Esophagus muscularis mucosa (tissue), 4 donors: ENCODE measurements at regions of chr20 and their contacts with region 1.

Region 1: GRCh38 chr20:63056236-63056948 is 49.6 kb upstream of the BHLHE23 start:
- DNase-seq: no peak
- H3K4me3 ChIP-seq: peak overlapping the region in 1 of 4 donors; percentile 28
- H3K27ac ChIP-seq: no peak overlapping the region
- H3K4me1 ChIP-seq: peaks cover 2 to 10% (median 8%) of the 10 kb centered on the region in 4 donors
- H3K27me3 ChIP-seq: peaks cover 0 to 92% (median 7%) of the 10 kb centered on the region in 4 donors
- CTCF ChIP-seq: peak; percentile 73 to 96 (median 90)
- EP300 ChIP-seq: no peak
- POLR2A ChIP-seq: no peak

Region 2: GRCh38 chr20:63129991-63130657 is 73.7 kb after region 1 on chr20:
- intact Hi-C with region 1: no loop called
- DNase-seq: no peak
- H3K4me3 ChIP-seq: no peak overlapping the region
- H3K27ac ChIP-seq: no peak overlapping the region
- H3K4me1 ChIP-seq: no peaks in the 10 kb centered on the region
- H3K27me3 ChIP-seq: peaks cover 0 to 81% (median 6%) of the 10 kb centered on the region in 4 donors
- CTCF ChIP-seq: no peak
- EP300 ChIP-seq: no peak
- POLR2A ChIP-seq: no peak

Region 3: DNA sequence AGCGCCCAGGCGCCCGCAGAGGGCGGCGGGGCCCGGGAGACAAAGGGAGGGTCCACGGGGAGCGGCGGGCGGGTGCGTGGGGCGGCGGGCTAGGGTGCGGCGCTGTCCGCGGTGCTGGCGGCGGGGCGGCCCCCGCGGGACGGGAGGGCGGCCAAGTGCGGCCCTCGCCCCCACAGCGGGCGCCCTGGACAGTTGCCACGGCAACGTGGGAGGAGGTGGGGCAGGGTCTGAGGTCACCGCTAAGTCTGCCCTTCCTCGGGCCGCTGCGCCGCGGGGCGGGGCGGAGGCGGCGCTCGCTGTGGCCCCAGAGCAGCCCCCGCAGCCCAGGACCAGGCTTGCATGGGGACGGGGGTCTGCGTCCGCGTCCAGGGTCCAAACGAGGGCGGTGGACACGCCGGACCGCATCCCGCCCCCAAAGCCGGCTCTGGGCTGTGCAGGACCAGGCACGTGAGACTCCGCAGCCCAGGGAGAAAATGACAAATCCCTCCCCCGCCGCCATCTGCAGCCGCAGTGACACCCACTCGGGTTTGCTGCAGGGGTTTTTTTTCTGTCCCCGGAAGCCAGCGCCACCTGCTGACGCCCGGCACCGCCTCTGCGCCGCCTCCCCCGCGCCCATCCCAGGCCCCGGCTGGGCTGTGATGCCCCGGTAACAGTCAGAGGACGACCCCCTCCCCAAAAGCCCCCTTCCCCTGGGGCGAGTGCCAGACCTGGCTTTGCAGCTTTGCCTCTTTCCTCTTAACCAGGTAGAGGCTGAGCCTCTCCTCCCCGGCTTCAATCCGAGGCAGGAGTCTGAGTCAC is 122.7 kb after region 1 on chr20:
- intact Hi-C with region 1: loop called (anchors 1 kb)
- DNase-seq: no peak
- H3K4me3 ChIP-seq: peak overlapping the region; percentile 32 to 48 (median 38)
- H3K27ac ChIP-seq: no peak overlapping the region
- H3K4me1 ChIP-seq: peaks cover 28 to 51% (median 48%) of the 10 kb centered on the region in 4 donors
- H3K27me3 ChIP-seq: peaks cover 7 to 98% (median 61%) of the 10 kb centered on the region in 4 donors
- CTCF ChIP-seq: peak in 2 of 3 experiments; percentile 46 to 60
- EP300 ChIP-seq: no peak
- POLR2A ChIP-seq: no peak

Region 4: DNA sequence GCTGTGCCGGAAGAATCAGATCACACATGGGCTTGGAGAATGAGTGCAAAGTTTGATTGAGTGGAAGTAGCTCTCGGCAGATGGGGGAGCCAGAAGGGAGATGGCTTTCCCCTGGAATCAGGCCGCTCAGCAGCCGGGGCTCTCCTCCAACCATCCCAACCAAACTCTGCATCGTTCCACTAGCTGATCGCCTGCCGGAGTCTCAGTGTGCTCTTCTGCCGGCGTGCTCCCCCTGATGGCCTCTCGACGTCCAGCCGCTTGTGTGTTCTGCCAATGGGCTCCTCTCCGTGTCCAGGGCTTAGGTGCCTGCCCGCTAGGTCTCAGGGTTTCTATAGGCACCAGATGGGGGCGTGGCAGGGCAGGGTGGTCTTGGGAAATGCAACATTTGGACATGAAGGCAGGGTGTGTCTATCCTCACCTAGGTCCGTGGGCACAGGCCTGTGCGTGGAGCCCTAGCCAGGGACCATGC is 174.4 kb after region 1 on chr20:
- intact Hi-C with region 1: loop called (anchors 5 kb)
- DNase-seq: no peak
- H3K4me3 ChIP-seq: no peak overlapping the region
- H3K27ac ChIP-seq: peak overlapping the region in 1 of 4 donors; percentile 14
- H3K4me1 ChIP-seq: peaks cover 0 to 10% (median 9%) of the 10 kb centered on the region in 4 donors
- H3K27me3 ChIP-seq: peaks cover 0 to 69% (median 4%) of the 10 kb centered on the region in 4 donors
- CTCF ChIP-seq: peak; percentile 50 to 62 (median 61)
- EP300 ChIP-seq: no peak
- POLR2A ChIP-seq: no peak